ENCODE measurements at regions of chr3 and their contacts with region 1.

Region 1: GRCh38 chr3:173568623-173569022 is 171.1 kb downstream of the NLGN1 start:
- DNase-seq: no peak
- ATAC-seq: no peak

Region 2: GRCh38 chr3:173553635-173554280 is 14.9 kb before region 1 on chr3:
- intact Hi-C with region 1: no loop called
- DNase-seq: no peak
- ATAC-seq: peak; percentile 51

Region 3: GRCh38 chr3:174308736-174309135 is 740.1 kb after region 1 on chr3:
- intact Hi-C with region 1: loop called (anchors 2 kb)
- DNase-seq: no peak
- ATAC-seq: no peak

Measured in sciatic nerve (tissue), 2 donors.